Gastrocnemius medialis (tissue), 4 donors: ENCODE measurements at regions of chr11 and their contacts with region 1.

Region 1: DNA sequence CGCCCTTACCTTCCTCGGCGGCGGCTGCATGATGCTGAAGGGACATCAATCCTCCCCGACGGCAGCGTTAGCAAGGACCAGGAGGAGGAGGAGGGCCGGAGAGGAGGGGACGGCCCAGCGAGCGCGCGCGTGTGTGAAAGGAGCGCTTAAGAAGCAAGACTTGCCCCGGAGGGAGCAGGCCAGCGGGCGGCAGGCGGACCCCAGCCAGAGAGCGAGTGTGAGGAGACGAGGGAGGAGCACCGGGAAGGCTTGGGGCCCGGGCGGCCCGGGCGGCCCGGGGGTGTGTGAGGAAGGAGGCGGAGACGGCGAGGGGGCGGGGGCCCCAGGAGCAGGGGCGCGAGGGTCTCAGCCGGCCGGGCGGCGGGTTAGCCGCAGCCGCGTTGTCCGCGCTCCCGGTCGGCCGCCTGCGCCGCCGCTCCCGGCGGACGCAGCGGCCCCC is 251 bp downstream of the FCHSD2 start:
- DNase-seq: peak; percentile 38 to 60
- ATAC-seq: peak; percentile 45 to 51
- H3K4me3 ChIP-seq: peak overlapping the region; percentile 93 to 99 (median 98)
- H3K27ac ChIP-seq: peak overlapping the region; percentile 92 to 99 (median 96)
- H3K4me1 ChIP-seq: peaks cover 18 to 21% of the 10 kb centered on the region in 2 donors
- H3K27me3 ChIP-seq: no peaks in the 10 kb centered on the region
- CTCF ChIP-seq: no peak
- POLR2A ChIP-seq: peak; percentile 59 to 64

Region 2: DNA sequence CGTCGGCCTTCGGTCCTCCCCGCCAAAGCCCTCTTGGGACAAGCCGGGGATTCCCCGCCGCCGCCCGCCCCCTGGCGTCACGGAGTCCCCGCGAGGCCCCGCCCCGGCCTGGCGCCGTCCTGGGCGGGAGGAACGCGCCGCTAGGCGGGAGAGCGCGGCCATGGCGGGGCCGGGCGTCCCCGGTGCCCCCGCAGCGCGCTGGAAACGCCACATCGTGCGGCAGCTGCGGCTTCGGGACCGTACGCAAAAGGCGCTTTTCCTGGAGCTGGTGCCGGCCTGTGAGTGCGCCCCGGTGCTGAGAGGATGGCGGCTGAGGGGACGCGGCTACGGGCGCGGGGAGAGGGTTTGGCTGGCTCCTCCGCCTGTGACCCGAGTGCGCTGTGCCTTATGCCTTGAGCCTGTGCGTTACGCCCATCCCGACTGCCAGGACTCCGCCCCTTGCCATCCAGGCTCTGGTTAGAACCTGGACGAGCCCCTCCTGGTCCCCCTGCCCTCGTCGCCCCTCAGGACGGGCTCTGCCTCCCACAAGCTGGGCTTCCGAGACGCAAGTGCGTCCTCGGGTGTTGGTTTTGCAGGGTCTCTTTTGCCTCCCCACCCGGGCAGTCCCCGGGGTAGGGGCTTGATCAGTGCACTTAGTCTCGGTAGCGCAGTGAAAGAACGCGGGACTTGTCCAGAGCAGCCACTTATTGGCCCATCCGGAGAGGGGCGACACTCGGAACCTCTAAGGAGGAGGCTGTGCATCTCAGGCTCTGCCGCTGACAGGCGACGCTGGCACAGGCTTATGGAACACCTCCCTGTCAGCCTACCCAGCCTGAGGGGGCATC is 327.4 kb before region 1 on chr11 and contains the start of gene ATG16L2:
- in situ Hi-C with region 1: no loop called
- intact Hi-C with region 1: loop called (anchors 1 kb)
- DNase-seq: peak; percentile 71 to 78
- ATAC-seq: peak; percentile 88 to 90
- H3K4me3 ChIP-seq: peak within 1 kb of the TSS; percentile 75 to 100 (median 94)
- H3K27ac ChIP-seq: peak within 1 kb of the TSS; percentile 88 to 100 (median 94)
- H3K4me1 ChIP-seq: peaks cover 13 to 26% of the 10 kb centered on the region in 2 donors
- H3K27me3 ChIP-seq: no peaks in the 10 kb centered on the region
- CTCF ChIP-seq: peak; percentile 7 to 69 (median 33)
- POLR2A ChIP-seq: peak; percentile 65 to 70
- total RNA-seq, gene ATG16L2: 3.1 to 8.1 (median 4.3) TPM

Region 3: DNA sequence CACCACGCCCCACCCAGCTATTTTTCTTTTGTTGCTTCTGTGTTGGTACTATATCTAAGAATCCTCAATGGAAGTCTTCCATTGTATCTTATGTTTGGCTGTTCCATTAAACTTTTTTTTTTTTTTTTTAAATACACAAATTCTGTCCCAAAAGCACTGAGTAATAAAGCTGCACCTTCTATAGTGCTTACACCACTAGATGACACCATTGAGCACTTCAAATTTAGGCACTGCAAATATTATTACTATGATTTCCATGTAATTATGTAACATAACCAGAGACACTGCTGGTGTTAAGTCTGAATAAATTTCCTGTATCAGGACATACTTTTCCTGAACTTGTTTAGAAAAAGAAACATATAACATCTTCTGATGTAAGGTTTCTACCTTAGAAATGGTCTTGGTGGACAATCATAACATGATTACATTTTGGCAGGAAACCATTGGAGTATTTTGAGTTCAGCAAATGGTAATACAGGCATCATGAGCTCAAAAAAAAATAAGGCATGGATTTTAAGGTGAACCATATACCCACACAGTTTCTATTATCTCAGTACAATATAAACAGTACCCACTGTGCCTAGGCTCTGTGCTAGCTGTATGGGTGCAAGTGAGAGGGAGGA is 217.2 kb before region 1 on chr11:
- in situ Hi-C with region 1: no loop called
- intact Hi-C with region 1: loop called (anchors 10 kb)
- DNase-seq: no peak
- ATAC-seq: peak; percentile 45 to 75
- H3K4me3 ChIP-seq: no peak overlapping the region
- H3K27ac ChIP-seq: no peak overlapping the region
- H3K4me1 ChIP-seq: peaks cover 4 to 8% of the 10 kb centered on the region in 2 donors
- H3K27me3 ChIP-seq: no peaks in the 10 kb centered on the region
- CTCF ChIP-seq: peak; percentile 25 to 59 (median 38)
- POLR2A ChIP-seq: no peak

Region 4: GRCh38 chr11:73085189-73085875 is 56.5 kb before region 1 on chr11:
- in situ Hi-C with region 1: no loop called
- intact Hi-C with region 1: loop called (anchors 5 kb)
- DNase-seq: peak; percentile 41 to 45
- ATAC-seq: peak; percentile 100
- H3K4me3 ChIP-seq: no peak overlapping the region
- H3K27ac ChIP-seq: peak overlapping the region; percentile 73 to 82 (median 77)
- H3K4me1 ChIP-seq: peaks cover 9 to 10% of the 10 kb centered on the region in 2 donors
- H3K27me3 ChIP-seq: no peaks in the 10 kb centered on the region
- CTCF ChIP-seq: no peak
- POLR2A ChIP-seq: peak in 1 of 2 donors; percentile 67

Region 5: GRCh38 chr11:73177778-73178577 is 36.1 kb after region 1 on chr11:
- in situ Hi-C with region 1: no loop called
- intact Hi-C with region 1: loop called (anchors 2 kb)
- DNase-seq: peak; percentile 56 to 72
- ATAC-seq: peak; percentile 64 to 71
- H3K4me3 ChIP-seq: no peak overlapping the region
- H3K27ac ChIP-seq: peak overlapping the region; percentile 29 to 63 (median 46)
- H3K4me1 ChIP-seq: peaks cover 16 to 25% of the 10 kb centered on the region in 2 donors
- H3K27me3 ChIP-seq: no peaks in the 10 kb centered on the region
- CTCF ChIP-seq: peak; percentile 80 to 92 (median 89)
- POLR2A ChIP-seq: no peak

Region 6: GRCh38 chr11:73257342-73258103 is 115.7 kb after region 1 on chr11:
- in situ Hi-C with region 1: no loop called
- intact Hi-C with region 1: no loop called
- DNase-seq: peak in 1 of 2 donors; percentile 25
- ATAC-seq: peak in 1 of 2 donors; percentile 39
- H3K4me3 ChIP-seq: no peak overlapping the region
- H3K27ac ChIP-seq: peak overlapping the region in 3 of 4 donors; percentile 3 to 30 (median 15)
- H3K4me1 ChIP-seq: peaks cover 12 to 17% of the 10 kb centered on the region in 2 donors
- H3K27me3 ChIP-seq: no peaks in the 10 kb centered on the region
- CTCF ChIP-seq: no peak
- POLR2A ChIP-seq: no peak

Region 7: GRCh38 chr11:73376160-73376802 is 234.4 kb after region 1 on chr11 and contains the start of gene RELT:
- in situ Hi-C with region 1: no loop called
- intact Hi-C with region 1: no loop called
- DNase-seq: peak; percentile 78 to 85
- ATAC-seq: peak; percentile 60 to 64
- H3K4me3 ChIP-seq: peak within 1 kb of the TSS; percentile 60 to 94 (median 76)
- H3K27ac ChIP-seq: peak within 1 kb of the TSS; percentile 87 to 99 (median 98)
- H3K4me1 ChIP-seq: peaks cover 39 to 44% of the 10 kb centered on the region in 2 donors
- H3K27me3 ChIP-seq: no peaks in the 10 kb centered on the region
- CTCF ChIP-seq: peak; percentile 90 to 98 (median 96)
- POLR2A ChIP-seq: peak; percentile 100
- total RNA-seq, gene RELT: 18.5 to 63.5 (median 36.7) TPM